ENCODE measurements at regions of chr12 and their contacts with region 1.

Region 1: GRCh38 chr12:56127888-56128669 is at the start of gene ESYT1:
- DNase-seq: peak; percentile 98
- H3K4me3 ChIP-seq: peak within 1 kb of the TSS; percentile 78
- CTCF ChIP-seq: no peak

Region 2: GRCh38 chr12:56158029-56158925 is 30.2 kb after region 1 on chr12 and contains the start of gene MYL6:
- CTCF ChIA-PET with region 1: interaction called, 15 read pairs
- POLR2A ChIA-PET with region 1: interaction called, 23 read pairs
- DNase-seq: peak; percentile 86
- H3K4me3 ChIP-seq: peak within 1 kb of the TSS; percentile 99
- CTCF ChIP-seq: no peak

Region 3: DNA sequence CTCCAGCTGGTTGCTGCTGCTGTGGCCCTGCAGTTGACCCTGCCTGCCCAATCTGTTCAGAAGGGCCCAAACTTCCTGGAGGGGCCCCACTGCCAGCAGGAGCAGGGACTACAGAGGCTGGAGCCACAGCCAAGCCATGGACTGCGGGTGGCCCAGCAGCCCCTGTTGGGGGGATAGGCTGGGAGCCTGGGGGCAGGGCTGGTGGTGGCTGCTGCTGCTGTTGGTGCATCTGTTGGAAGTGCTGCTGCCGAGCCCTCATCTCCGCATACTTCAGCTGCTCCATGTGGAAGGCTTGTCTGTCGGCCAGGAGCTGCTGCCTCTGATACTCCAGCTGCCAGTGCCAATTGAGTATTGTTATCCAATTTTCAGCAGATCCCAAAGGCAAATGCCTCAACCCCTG is 37.3 kb after region 1 on chr12:
- CTCF ChIA-PET with region 1: interaction called, 15 read pairs
- POLR2A ChIA-PET with region 1: interaction called, 14 read pairs
- DNase-seq: no peak
- H3K4me3 ChIP-seq: no peak overlapping the region
- CTCF ChIP-seq: no peak

Measured in AG04449 (cell line).